IMR-90 (cell line): ENCODE measurements at regions of chr1 and their contacts with region 1.

Region 1: GRCh38 chr1:54335755-54336108 is 70.5 kb downstream of the SSBP3 start:
- DNase-seq: peak; percentile 95
- ATAC-seq: peak; percentile 69
- H3K4me3 ChIP-seq: peak overlapping the region; percentile 13
- H3K27ac ChIP-seq: peak overlapping the region; percentile 97
- H3K4me1 ChIP-seq: peaks cover 50% of the 10 kb centered on the region
- H3K27me3 ChIP-seq: no peaks in the 10 kb centered on the region
- CTCF ChIP-seq: no peak
- POLR2A ChIP-seq: no peak
- RAD21 ChIP-seq: peak; percentile 30; the same call in 1 of the 2 replicates

Region 2: GRCh38 chr1:54367613-54368012 is 31.9 kb after region 1 on chr1:
- CTCF ChIA-PET with region 1: no interaction called
- POLR2A ChIA-PET with region 1: no interaction called
- dilution Hi-C with region 1: no loop called
- in situ Hi-C with region 1: no loop called
- intact Hi-C with region 1: loop called (anchors 1 kb)
- DNase-seq: peak; percentile 65
- ATAC-seq: peak; percentile 76
- H3K4me3 ChIP-seq: no peak overlapping the region
- H3K27ac ChIP-seq: peak overlapping the region; percentile 52; the same call in 1 of the 2 replicates
- H3K4me1 ChIP-seq: peaks cover 17% of the 10 kb centered on the region
- H3K27me3 ChIP-seq: no peaks in the 10 kb centered on the region
- CTCF ChIP-seq: no peak
- POLR2A ChIP-seq: no peak
- RAD21 ChIP-seq: no peak

Region 3: DNA sequence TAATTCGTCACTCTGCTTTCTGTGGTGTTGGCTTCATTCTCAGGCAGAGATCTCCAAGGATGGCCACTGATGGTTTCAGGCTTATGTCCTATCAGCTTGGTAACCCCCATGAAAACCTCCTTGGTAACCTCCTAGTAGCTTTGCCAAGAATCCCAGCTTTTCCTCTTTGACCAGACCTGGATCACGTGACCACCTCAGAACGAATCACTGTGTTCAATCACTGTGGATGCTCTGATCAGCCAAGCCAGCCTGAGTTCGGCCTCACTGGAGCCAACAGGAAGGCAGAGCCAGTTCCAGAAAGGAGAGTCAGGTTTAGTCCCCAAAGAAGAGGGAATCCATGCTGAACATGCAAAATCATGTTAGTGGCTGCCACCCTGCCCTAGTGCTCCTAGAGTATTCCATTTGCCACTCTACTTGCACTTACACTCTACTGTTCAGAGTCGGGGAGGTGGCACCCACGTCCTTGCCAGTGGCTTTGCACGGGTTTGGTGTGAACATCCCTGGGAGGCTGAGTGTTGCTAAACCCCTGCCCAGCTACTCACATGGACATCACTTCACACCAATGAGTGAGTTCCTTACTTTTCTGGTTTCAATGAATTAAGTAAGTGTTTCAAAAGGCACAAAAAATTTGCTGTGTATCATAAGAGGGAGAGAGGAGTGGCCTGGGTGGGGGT is 104.0 kb after region 1 on chr1:
- CTCF ChIA-PET with region 1: no interaction called
- POLR2A ChIA-PET with region 1: no interaction called
- dilution Hi-C with region 1: no loop called
- in situ Hi-C with region 1: no loop called
- intact Hi-C with region 1: no loop called
- DNase-seq: no peak
- ATAC-seq: no peak
- H3K4me3 ChIP-seq: no peak overlapping the region
- H3K27ac ChIP-seq: no peak overlapping the region
- H3K4me1 ChIP-seq: no peaks in the 10 kb centered on the region
- H3K27me3 ChIP-seq: peaks cover 2% of the 10 kb centered on the region; the same call in 1 of the 2 replicates
- CTCF ChIP-seq: no peak
- POLR2A ChIP-seq: no peak
- RAD21 ChIP-seq: no peak